ENCODE measurements at regions of chr11 and their contacts with region 1.

Region 1: GRCh38 chr11:59822989-59823566 is 12.5 kb upstream of the MRPL16 start:
- DNase-seq: no peak

Region 2: GRCh38 chr11:60130496-60130895 is 307.4 kb after region 1 on chr11:
- intact Hi-C with region 1: loop called (anchors 1 kb)
- DNase-seq: peak in 1 of 10 donors; percentile 9

Region 3: DNA sequence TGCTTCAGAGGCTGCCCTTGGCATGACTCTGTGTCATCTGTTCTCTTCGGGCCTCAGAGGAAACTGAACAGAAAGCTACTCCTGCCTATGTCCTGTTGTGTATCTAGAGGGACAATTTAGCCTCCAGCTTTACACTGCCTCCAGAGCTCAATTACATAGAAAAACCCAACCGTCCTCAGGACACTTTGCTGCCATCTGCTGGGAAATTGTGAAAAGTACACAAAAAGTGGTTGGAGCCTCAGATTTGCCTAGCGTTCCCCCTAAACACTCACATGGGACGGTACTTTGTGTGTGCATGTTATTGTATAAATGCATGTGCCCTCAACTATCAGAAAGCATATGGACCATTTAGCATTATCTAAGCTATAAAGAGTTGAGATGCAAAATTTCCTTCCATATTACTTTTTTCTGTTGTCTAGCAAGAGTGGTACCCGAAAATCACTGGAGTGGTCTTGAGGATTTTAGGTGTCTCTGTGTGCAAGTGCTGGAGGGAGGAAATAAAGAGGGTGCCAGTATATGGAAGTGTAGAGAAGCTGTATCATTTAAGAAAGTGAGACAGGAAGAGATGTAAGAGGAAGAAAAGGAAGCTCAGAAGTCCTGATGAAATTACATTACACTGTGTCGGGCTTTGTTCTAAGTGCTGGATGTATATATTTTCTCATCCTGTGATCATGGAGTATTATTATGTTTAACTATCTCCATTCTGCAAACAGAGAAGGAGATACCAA is 428.6 kb after region 1 on chr11:
- intact Hi-C with region 1: loop called (anchors 5 kb)
- DNase-seq: no peak

Region 4: DNA sequence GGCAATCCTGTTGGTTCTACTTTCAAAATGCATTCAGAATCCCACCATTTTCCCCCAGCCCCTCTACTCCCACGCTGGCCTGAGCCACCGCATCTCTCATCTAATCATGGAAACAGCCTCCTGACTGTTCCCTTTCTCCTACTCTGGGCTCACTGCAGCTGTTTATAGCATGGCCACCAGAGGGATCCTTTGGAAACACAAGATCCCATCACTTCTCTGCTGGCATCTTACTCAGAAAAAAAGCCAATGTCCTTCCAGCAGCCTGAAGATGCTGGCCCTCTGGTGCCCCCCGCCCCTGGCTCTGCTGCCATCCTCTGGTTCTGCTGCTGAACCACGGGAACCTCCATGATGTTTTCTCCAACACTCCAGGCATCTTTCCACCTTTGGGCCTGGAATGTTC is 887.4 kb after region 1 on chr11:
- intact Hi-C with region 1: no loop called
- DNase-seq: no peak

Measured in posterior cingulate gyrus (tissue), 11 donors.